PC-9 (cell line): ENCODE measurements at regions of chr3 and their contacts with region 1.

Region 1: GRCh38 chr3:188397766-188398705 is 244.1 kb downstream of the LPP start:
- DNase-seq: no peak
- H3K4me3 ChIP-seq: no peak overlapping the region
- H3K27ac ChIP-seq: no peak overlapping the region
- H3K4me1 ChIP-seq: no peaks in the 10 kb centered on the region
- H3K27me3 ChIP-seq: no peaks in the 10 kb centered on the region
- CTCF ChIP-seq: no peak

Region 2: GRCh38 chr3:186920796-186921195 is 1477.2 kb before region 1 on chr3:
- CTCF ChIA-PET with region 1: no interaction called
- POLR2A ChIA-PET with region 1: interaction called, 14 read pairs
- intact Hi-C with region 1: no loop called
- DNase-seq: no peak
- H3K4me3 ChIP-seq: no peak overlapping the region
- H3K27ac ChIP-seq: no peak overlapping the region
- H3K4me1 ChIP-seq: no peaks in the 10 kb centered on the region
- H3K27me3 ChIP-seq: no peaks in the 10 kb centered on the region
- CTCF ChIP-seq: no peak

Region 3: DNA sequence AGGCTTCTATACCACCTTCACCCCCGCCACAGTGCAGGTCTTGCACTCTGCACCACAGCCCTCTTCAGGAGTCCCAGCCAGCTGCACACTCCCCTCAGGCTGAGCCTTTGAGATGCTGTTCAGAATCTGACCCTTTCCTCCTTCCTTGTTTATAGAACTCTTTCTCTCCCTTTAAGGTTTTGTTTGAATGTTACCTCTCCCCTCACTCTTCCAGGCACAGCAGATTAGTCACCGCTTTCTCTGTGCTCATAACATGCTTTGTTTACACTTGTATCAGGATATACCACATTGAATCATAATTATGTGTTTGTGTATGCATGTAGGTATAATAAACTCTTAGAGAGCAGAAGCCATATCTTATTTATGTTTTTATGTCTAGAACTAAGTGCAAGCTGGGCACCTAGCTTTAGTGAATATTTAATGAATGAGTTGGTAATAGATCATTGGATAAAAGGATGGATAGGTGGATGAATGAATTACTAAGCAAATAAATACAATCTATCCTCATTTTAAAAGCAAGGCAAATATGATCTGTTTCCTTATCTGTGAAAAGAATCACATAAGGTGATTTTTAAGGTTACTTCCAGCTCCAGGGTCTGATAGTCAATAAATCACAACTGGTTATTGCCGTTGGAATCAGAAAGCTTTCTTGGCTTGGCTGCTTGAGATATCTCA is 484.3 kb before region 1 on chr3:
- CTCF ChIA-PET with region 1: no interaction called
- POLR2A ChIA-PET with region 1: no interaction called
- intact Hi-C with region 1: no loop called
- DNase-seq: peak; percentile 64 to 100
- H3K4me3 ChIP-seq: peak overlapping the region; percentile 15; the same call in 1 of the 2 replicates
- H3K27ac ChIP-seq: peak overlapping the region; percentile 94
- H3K4me1 ChIP-seq: peaks cover 85% of the 10 kb centered on the region
- H3K27me3 ChIP-seq: no peaks in the 10 kb centered on the region
- CTCF ChIP-seq: no peak